HCT116 (cell line): ENCODE measurements at regions of chr19 and their contacts with region 1.

Region 1: DNA sequence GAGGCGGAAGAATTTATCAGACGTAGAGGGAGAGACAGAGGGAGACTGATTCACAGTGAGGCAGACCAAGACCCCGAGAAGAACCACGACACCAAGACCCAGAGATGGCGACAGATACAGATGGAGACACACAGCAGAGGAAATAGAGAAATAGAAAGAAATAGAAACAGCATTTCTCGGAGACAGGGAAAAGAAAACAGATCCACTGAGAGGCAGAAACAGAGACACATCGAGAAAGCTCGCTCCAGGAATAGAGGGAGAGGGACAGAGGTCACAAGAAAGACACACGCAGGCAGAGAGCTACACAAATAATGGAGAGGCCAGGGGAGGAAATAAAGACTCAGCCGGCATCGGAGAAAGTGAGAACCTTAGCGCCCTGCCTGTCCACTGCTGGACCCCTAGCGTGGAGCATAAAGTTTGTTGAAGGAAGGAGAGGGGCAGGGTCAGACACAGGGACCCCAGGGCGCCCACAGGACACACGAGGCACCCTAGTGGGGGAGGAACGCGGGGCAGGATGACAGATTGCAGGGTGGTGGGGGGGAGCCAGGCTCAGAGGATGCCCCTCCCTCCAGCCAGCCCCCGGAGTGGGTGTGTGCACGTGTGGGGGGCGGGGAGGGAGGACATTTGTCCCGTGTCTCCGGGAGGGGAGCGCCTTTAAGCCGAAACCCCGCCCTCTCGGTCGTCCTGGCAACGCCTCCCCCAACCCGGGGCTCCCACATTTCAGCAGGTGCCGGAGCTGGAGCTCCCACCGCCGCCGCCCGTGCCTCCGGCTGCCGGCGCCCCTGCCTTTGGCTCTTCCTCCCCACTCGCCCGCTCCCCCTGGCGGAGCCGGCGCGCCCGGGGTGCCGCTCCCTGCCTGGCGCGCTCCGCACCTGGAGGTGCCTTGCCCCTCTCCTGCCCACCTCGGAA is at the start of gene PRKCG:
- DNase-seq: no peak
- ATAC-seq: peak; percentile 61
- H3K4me3 ChIP-seq: peak within 1 kb of the TSS; percentile 40 to 52
- H3K27ac ChIP-seq: peak within 1 kb of the TSS; percentile 32; the same call in 1 of the 2 replicates
- H3K4me1 ChIP-seq: peaks cover 21 to 37% of the 10 kb centered on the region in 2 experiments
- H3K27me3 ChIP-seq: no peaks in the 10 kb centered on the region
- CTCF ChIP-seq: peak in 2 of 3 experiments; percentile 40 to 56; a peak in 4 of 6 replicates
- POLR2A ChIP-seq: no peak
- RAD21 ChIP-seq: peak; percentile 29; the same call in 1 of the 2 replicates
- total RNA-seq, gene PRKCG: 2.8 TPM

Region 2: DNA sequence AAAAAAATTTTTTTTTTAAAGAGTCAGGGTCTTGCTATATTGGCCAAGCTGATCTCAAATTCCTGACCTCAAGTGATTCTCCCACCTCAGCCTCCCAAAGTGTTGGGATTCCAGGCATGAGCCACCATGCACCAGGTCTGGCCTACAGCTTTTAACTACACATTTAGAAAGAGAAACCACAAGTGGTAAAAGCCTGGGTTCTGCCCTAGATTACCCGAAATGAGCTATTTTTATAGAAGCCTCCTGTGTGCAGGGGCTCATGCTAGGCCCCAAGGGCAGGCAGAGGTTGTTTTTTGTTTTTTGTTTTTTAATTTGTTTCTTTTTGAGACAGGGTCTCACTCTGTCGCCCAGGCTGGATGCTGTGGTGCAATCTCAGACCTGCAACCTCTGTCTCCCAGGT is 28.0 kb before region 1 on chr19:
- CTCF ChIA-PET with region 1: no interaction called
- POLR2A ChIA-PET with region 1: no interaction called
- RAD21 ChIA-PET with region 1: interaction called in 1 of 2 experiments, 5 read pairs
- intact Hi-C with region 1: loop called (anchors 1 kb)
- DNase-seq: no peak
- ATAC-seq: no peak
- H3K4me3 ChIP-seq: no peak overlapping the region
- H3K27ac ChIP-seq: no peak overlapping the region
- H3K4me1 ChIP-seq: peaks cover 0 to 6% of the 10 kb centered on the region in 2 experiments; a peak in 3 of 4 replicates
- H3K27me3 ChIP-seq: no peaks in the 10 kb centered on the region
- CTCF ChIP-seq: no peak
- POLR2A ChIP-seq: no peak
- RAD21 ChIP-seq: no peak

Region 3: DNA sequence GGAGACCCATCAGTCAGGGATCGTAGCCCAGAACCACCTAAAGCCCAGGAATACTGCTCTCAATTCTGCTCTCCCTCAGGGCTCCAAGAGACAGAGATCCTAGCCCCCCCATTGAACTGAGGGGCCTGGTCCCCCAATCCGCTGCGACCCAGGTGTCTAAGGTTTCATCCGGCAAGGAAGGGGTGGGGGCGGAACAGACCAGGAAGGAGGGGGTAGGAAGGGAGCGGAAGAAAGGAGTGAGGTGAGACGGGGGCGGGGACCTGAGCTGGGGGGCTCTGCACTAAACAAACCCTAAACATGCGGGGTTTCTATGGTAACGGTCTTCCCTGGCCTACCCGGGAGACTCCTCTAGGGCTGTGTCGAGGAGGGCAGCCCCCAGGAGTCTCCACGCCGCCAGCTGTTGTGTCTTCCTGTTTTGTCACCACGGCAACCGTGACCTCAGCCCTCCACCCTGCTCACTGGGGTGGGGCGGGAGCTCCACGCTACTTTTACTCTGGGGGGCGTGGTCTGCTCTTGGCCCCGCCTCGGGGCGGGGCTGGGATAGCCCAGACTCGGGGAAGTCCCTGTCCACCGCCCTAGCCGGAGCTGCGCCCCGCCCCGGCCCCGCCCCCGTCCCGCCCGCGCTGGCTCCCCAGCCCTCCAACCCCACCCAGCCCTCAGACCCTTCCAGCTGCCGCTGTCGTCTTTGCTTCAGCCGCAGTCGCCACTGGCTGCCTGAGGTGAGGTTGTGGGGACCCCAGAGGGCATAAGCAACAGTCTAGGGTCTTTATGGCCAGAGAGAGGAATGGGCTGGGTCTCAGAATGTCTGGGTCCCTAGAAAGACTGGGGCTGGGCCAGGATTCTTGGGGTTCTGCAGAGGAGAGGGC is 14.3 kb before region 1 on chr19 and contains the start of gene MYADM:
- CTCF ChIA-PET with region 1: interaction called, 6 read pairs
- POLR2A ChIA-PET with region 1: interaction called, 15 read pairs
- RAD21 ChIA-PET with region 1: no interaction called
- intact Hi-C with region 1: no loop called
- DNase-seq: peak; percentile 95
- ATAC-seq: peak; percentile 59
- H3K4me3 ChIP-seq: peak within 1 kb of the TSS; percentile 75 to 78
- H3K27ac ChIP-seq: peak within 1 kb of the TSS; percentile 80
- H3K4me1 ChIP-seq: peaks cover 18 to 47% of the 10 kb centered on the region in 2 experiments
- H3K27me3 ChIP-seq: no peaks in the 10 kb centered on the region
- CTCF ChIP-seq: no peak
- POLR2A ChIP-seq: peak; percentile 43
- RAD21 ChIP-seq: no peak
- total RNA-seq, gene MYADM: 79.6 TPM

Region 4: GRCh38 chr19:53894707-53895106 is 13.0 kb after region 1 on chr19:
- CTCF ChIA-PET with region 1: no interaction called
- POLR2A ChIA-PET with region 1: no interaction called
- RAD21 ChIA-PET with region 1: no interaction called
- intact Hi-C with region 1: no loop called
- DNase-seq: no peak
- ATAC-seq: no peak
- H3K4me3 ChIP-seq: no peak overlapping the region
- H3K27ac ChIP-seq: no peak overlapping the region
- H3K4me1 ChIP-seq: peaks cover 12 to 29% of the 10 kb centered on the region in 2 experiments; a peak in 3 of 4 replicates
- H3K27me3 ChIP-seq: no peaks in the 10 kb centered on the region
- CTCF ChIP-seq: no peak
- POLR2A ChIP-seq: no peak
- RAD21 ChIP-seq: no peak